ENCODE measurements at regions of chr7 and their contacts with region 1.

Region 1: GRCh38 chr7:22559829-22560489 is 60.0 kb upstream of the STEAP1B start:
- DNase-seq: peak; percentile 88
- H3K27ac ChIP-seq: no peak overlapping the region
- CTCF ChIP-seq: peak; percentile 96

Region 2: GRCh38 chr7:22726345-22727185 is 166.6 kb after region 1 on chr7:
- CTCF ChIA-PET with region 1: interaction called, 50 read pairs
- POLR2A ChIA-PET with region 1: no interaction called
- DNase-seq: peak; percentile 74
- H3K27ac ChIP-seq: peak overlapping the region; percentile 90
- CTCF ChIP-seq: peak; percentile 73

Region 3: GRCh38 chr7:22732556-22733126 is 172.7 kb after region 1 on chr7:
- CTCF ChIA-PET with region 1: interaction called, 50 read pairs
- POLR2A ChIA-PET with region 1: no interaction called
- DNase-seq: peak; percentile 42
- H3K27ac ChIP-seq: no peak overlapping the region
- CTCF ChIP-seq: peak; percentile 33